ENCODE measurements at regions of chrX and their contacts with region 1.

Region 1: DNA sequence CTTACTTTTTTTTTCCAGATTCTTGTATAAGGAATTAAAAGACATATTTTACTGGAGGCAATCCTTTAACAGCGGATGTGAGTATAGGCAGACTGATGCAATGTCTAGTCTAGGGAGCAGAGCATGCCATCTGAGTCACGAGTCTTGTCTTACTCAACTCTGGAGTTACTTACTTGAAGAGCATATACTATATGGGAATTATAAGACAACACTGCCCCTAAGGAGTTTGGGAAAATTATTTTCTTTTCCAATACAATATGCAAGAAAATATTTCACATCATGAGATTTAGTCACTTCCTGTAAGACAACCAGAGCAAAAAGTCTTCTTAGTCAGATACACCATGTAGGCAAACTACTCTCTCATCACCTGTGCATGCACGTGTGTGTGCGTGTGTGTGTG is 537.3 kb upstream of the FTHL17 start:
- DNase-seq: peak; percentile 85
- H3K4me3 ChIP-seq: no peak overlapping the region
- H3K27ac ChIP-seq: peak overlapping the region; percentile 89
- H3K4me1 ChIP-seq: peaks cover 20% of the 10 kb centered on the region
- H3K27me3 ChIP-seq: no peaks in the 10 kb centered on the region
- CTCF ChIP-seq: peak in 1 of 2 donors; percentile 17

Region 2: DNA sequence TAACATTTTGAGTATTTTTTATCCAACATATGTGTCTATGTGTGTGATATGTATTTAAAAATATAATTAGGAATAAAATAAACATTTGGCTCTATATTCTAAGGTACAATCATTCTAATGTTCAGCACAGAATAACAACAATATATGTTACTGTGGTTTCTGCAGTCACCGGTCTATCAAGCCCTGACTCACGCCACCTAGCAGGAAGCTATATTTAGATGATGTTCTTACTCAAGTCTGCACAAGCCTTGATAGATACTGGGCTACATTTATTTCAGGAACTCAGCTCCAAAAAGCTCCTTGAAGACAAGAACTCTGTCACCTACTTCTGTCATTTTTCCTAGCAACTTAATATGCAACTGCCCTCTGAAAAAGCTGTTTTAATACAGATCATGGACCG is 385.3 kb before region 1 on chrX:
- CTCF ChIA-PET with region 1: no interaction called
- dilution Hi-C with region 1: no loop called
- in situ Hi-C with region 1: loop called in 1 of 2 experiments (anchors 10 kb)
- intact Hi-C with region 1: no loop called
- DNase-seq: peak; percentile 83
- H3K4me3 ChIP-seq: peak overlapping the region in 2 of 3 experiments; percentile 11 to 23
- H3K27ac ChIP-seq: peak overlapping the region; percentile 98
- H3K4me1 ChIP-seq: peaks cover 41% of the 10 kb centered on the region
- H3K27me3 ChIP-seq: no peaks in the 10 kb centered on the region
- CTCF ChIP-seq: no peak

Region 3: DNA sequence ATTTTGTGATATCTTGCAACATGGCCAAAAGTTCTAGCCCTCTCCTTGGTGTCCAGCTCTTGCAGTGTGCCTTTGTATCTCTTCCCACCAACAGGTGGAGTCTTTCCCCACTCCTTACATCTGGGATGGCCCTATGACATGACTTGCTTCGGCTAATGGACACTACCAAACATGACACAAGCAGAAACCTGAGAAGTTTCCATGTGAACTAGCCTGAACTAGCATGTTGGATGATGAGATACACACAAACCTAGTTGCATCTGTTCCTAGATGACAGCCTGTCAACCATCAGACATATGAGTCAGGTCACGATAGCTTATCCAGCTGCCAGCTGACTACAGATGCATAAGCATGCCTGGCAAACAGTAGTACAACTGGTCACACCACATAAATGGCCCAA is 329.8 kb before region 1 on chrX:
- CTCF ChIA-PET with region 1: no interaction called
- dilution Hi-C with region 1: no loop called
- in situ Hi-C with region 1: no loop called
- intact Hi-C with region 1: loop called (anchors 1 kb)
- DNase-seq: peak; percentile 42
- H3K4me3 ChIP-seq: no peak overlapping the region
- H3K27ac ChIP-seq: no peak overlapping the region
- H3K4me1 ChIP-seq: no peaks in the 10 kb centered on the region
- H3K27me3 ChIP-seq: no peaks in the 10 kb centered on the region
- CTCF ChIP-seq: peak; percentile 71 to 72

Region 4: GRCh38 chrX:31298916-31299315 is 310.2 kb before region 1 on chrX:
- CTCF ChIA-PET with region 1: no interaction called
- dilution Hi-C with region 1: no loop called
- in situ Hi-C with region 1: no loop called
- intact Hi-C with region 1: loop called (anchors 5 kb)
- DNase-seq: no peak
- H3K4me3 ChIP-seq: no peak overlapping the region
- H3K27ac ChIP-seq: no peak overlapping the region
- H3K4me1 ChIP-seq: peaks cover 10% of the 10 kb centered on the region
- H3K27me3 ChIP-seq: no peaks in the 10 kb centered on the region
- CTCF ChIP-seq: no peak

Region 5: GRCh38 chrX:31384471-31384870 is 224.7 kb before region 1 on chrX:
- CTCF ChIA-PET with region 1: no interaction called
- dilution Hi-C with region 1: no loop called
- in situ Hi-C with region 1: no loop called
- intact Hi-C with region 1: no loop called
- DNase-seq: no peak
- H3K4me3 ChIP-seq: no peak overlapping the region
- H3K27ac ChIP-seq: no peak overlapping the region
- H3K4me1 ChIP-seq: no peaks in the 10 kb centered on the region
- H3K27me3 ChIP-seq: no peaks in the 10 kb centered on the region
- CTCF ChIP-seq: no peak

Measured in mammary epithelial cell (primary cell).